ENCODE measurements at regions of chr6 and their contacts with region 1.

Region 1: GRCh38 chr6:3816251-3816650 is 32.9 kb upstream of the FAM50B start:
- DNase-seq: peak in 1 of 2 experiments; percentile 48
- H3K4me3 ChIP-seq: no peak overlapping the region
- H3K27ac ChIP-seq: no peak overlapping the region
- H3K4me1 ChIP-seq: peaks cover 32% of the 10 kb centered on the region
- H3K27me3 ChIP-seq: no peaks in the 10 kb centered on the region
- CTCF ChIP-seq: no peak

Region 2: GRCh38 chr6:3769565-3769964 is 46.7 kb before region 1 on chr6:
- CTCF ChIA-PET with region 1: no interaction called
- POLR2A ChIA-PET with region 1: no interaction called
- intact Hi-C with region 1: no loop called
- DNase-seq: peak in 1 of 2 experiments; percentile 41
- H3K4me3 ChIP-seq: no peak overlapping the region
- H3K27ac ChIP-seq: no peak overlapping the region
- H3K4me1 ChIP-seq: no peaks in the 10 kb centered on the region
- H3K27me3 ChIP-seq: no peaks in the 10 kb centered on the region
- CTCF ChIP-seq: no peak

Region 3: DNA sequence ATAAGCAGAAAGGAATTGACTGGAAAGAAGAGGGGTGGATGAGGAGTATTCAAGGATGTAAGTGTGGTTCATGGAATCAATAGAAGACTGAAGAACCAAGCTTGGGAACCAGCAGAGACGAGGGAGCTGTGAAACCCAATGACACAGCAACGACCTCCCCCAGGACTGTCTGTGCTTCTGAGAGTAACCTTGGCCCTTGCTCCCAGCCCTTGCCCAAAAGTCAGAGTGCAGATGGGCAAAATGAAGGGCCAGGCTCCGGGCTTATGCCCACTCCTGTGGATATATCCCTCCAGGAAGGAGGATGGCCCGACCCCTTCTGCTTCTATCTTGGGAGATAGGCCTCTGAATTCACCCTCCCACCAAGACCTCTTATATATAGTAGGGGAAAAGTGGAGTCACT is 57.8 kb after region 1 on chr6:
- CTCF ChIA-PET with region 1: interaction called, 29 read pairs
- POLR2A ChIA-PET with region 1: no interaction called
- intact Hi-C with region 1: no loop called
- DNase-seq: no peak
- H3K4me3 ChIP-seq: no peak overlapping the region
- H3K27ac ChIP-seq: no peak overlapping the region
- H3K4me1 ChIP-seq: no peaks in the 10 kb centered on the region
- H3K27me3 ChIP-seq: no peaks in the 10 kb centered on the region
- CTCF ChIP-seq: no peak

Measured in PC-9 (cell line).